ENCODE measurements at regions of chr9 and their contacts with region 1.

Region 1: GRCh38 chr9:18343784-18344183 is 130.2 kb upstream of the ADAMTSL1 start:
- DNase-seq: no peak
- ATAC-seq: no peak
- H3K4me3 ChIP-seq: no peak overlapping the region
- H3K27ac ChIP-seq: no peak overlapping the region
- H3K4me1 ChIP-seq: peaks cover 0 to 10% (median 5%) of the 10 kb centered on the region in 9 donors
- H3K27me3 ChIP-seq: no peaks in the 10 kb centered on the region
- CTCF ChIP-seq: no peak

Region 2: GRCh38 chr9:18297550-18297908 is 46.3 kb before region 1 on chr9:
- intact Hi-C with region 1: loop called in 1 of 10 experiments (anchors 5 kb)
- DNase-seq: no peak
- ATAC-seq: no peak
- H3K4me3 ChIP-seq: peak overlapping the region in 1 of 10 donors; percentile 23
- H3K27ac ChIP-seq: peak overlapping the region in 3 of 10 donors; percentile 31 to 48 (median 39)
- H3K4me1 ChIP-seq: peaks cover 0 to 42% (median 13%) of the 10 kb centered on the region in 9 donors
- H3K27me3 ChIP-seq: no peaks in the 10 kb centered on the region
- CTCF ChIP-seq: peak in 3 of 9 donors; percentile 6 to 39 (median 14)

Region 3: GRCh38 chr9:18390393-18390792 is 46.6 kb after region 1 on chr9:
- intact Hi-C with region 1: no loop called
- DNase-seq: no peak
- ATAC-seq: peak in 1 of 8 donors; percentile 36
- H3K4me3 ChIP-seq: no peak overlapping the region
- H3K27ac ChIP-seq: no peak overlapping the region
- H3K4me1 ChIP-seq: peaks cover 0 to 18% (median 7%) of the 10 kb centered on the region in 9 donors
- H3K27me3 ChIP-seq: no peaks in the 10 kb centered on the region
- CTCF ChIP-seq: no peak

Measured in heart right ventricle (tissue), 16 donors.